ENCODE measurements at regions of chr9 and their contacts with region 1.

Region 1: DNA sequence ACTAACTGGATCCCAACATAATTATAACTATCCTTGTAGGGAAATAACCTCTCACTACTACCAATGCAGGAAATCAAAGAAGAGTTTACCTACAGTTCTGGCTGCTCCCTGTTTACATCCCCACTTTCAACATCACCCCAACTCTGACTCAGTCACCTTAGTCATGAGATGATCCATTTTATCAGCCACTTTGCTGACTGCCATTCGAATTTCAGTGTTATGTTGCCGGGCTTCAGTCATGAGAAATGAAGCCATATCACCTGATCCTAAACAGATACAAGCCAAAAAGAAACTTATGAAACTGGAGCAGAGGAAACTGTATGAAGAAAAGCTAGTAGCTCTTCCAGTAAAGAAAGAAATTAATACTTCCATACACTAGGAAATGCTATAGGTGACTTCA is 33.7 kb downstream of the SLC31A2 start:
- DNase-seq: no peak
- ATAC-seq: no peak
- H3K4me3 ChIP-seq: no peak overlapping the region
- H3K27ac ChIP-seq: no peak overlapping the region
- H3K4me1 ChIP-seq: no peaks in the 10 kb centered on the region
- H3K27me3 ChIP-seq: no peaks in the 10 kb centered on the region
- CTCF ChIP-seq: no peak
- POLR2A ChIP-seq: no peak

Region 2: GRCh38 chr9:113929634-113930389 is 745.3 kb after region 1 on chr9:
- in situ Hi-C with region 1: no loop called
- intact Hi-C with region 1: loop called (anchors 5 kb)
- DNase-seq: no peak
- ATAC-seq: no peak
- H3K4me3 ChIP-seq: no peak overlapping the region
- H3K27ac ChIP-seq: no peak overlapping the region
- H3K4me1 ChIP-seq: peaks cover 0 to 7% of the 10 kb centered on the region in 2 donors
- H3K27me3 ChIP-seq: no peaks in the 10 kb centered on the region
- CTCF ChIP-seq: no peak
- POLR2A ChIP-seq: no peak